ENCODE measurements at regions of chr5 and their contacts with region 1.

Region 1: DNA sequence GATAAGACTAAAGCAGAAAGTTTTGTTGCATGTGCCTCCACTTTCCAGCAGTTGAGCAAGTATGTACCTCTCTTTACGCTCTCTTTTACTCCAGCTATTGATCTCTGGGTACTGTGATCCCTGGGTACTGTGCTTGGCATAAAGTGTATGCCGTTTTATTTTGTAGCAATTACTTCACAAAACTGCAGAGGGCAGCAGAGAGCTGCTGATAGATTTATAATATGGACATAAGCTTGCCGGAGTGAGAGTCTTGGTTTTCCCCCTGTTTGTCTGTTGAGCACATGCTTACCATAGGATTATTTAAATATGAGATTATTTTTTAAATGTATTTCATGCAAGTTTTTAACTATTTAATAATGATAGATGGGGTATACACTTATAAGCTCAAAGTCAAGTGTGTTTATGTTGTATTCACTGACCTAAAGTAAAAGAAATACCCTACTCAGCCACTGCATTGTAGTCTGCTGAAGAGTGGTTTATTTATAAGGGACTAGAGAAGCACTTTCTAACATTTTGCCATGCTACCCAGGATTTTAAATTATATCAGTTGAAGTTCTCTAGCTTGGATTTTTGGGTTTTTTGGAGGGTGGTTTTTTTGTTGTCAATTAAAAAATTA is 13.0 kb downstream of the TTC1 start:
- DNase-seq: peak; percentile 36 to 58 (median 51)
- H3K4me3 ChIP-seq: no peak overlapping the region
- H3K4me3 Mint-ChIP-seq: peak overlapping the region in 4 of 7 donors; percentile 17 to 37 (median 30)
- H3K27ac ChIP-seq: no peak overlapping the region
- H3K27ac Mint-ChIP-seq: peak overlapping the region in 7 of 8 donors; percentile 9 to 91 (median 80)
- H3K4me1 ChIP-seq: peaks cover 7% of the 10 kb centered on the region
- H3K4me1 Mint-ChIP-seq: peaks cover 36 to 63% (median 47%) of the 10 kb centered on the region in 3 donors
- H3K27me3 ChIP-seq: no peaks in the 10 kb centered on the region
- H3K27me3 Mint-ChIP-seq: no peaks in the 10 kb centered on the region

Region 2: DNA sequence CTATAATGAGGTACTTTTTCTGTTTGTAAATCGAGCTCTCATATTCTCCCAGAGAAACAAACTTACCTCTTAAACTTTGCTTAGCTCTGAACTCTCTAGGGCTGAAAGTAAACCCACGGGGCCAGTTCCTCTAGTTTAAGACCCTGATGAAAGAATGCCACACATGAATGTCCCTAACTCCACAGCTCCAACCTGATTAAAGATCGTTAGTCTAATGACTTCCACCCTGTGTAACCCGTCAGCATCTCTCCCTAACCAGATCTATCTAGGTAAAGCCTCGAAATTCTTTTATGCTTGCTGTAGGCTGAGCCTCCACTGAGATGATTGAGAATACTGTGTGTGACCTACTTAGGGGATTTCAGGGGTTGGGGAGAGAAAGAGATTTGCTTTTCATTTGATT is 78.6 kb before region 1 on chr5:
- CTCF ChIA-PET with region 1: no interaction called
- POLR2A ChIA-PET with region 1: no interaction called
- DNase-seq: no peak
- H3K4me3 ChIP-seq: no peak overlapping the region
- H3K4me3 Mint-ChIP-seq: no peak overlapping the region
- H3K27ac ChIP-seq: no peak overlapping the region
- H3K27ac Mint-ChIP-seq: no peak overlapping the region
- H3K4me1 ChIP-seq: no peaks in the 10 kb centered on the region
- H3K4me1 Mint-ChIP-seq: peaks cover 0 to 2% (median 0%) of the 10 kb centered on the region in 3 donors
- H3K27me3 ChIP-seq: no peaks in the 10 kb centered on the region
- H3K27me3 Mint-ChIP-seq: peaks cover 15 to 54% of the 10 kb centered on the region in 2 donors

Region 3: DNA sequence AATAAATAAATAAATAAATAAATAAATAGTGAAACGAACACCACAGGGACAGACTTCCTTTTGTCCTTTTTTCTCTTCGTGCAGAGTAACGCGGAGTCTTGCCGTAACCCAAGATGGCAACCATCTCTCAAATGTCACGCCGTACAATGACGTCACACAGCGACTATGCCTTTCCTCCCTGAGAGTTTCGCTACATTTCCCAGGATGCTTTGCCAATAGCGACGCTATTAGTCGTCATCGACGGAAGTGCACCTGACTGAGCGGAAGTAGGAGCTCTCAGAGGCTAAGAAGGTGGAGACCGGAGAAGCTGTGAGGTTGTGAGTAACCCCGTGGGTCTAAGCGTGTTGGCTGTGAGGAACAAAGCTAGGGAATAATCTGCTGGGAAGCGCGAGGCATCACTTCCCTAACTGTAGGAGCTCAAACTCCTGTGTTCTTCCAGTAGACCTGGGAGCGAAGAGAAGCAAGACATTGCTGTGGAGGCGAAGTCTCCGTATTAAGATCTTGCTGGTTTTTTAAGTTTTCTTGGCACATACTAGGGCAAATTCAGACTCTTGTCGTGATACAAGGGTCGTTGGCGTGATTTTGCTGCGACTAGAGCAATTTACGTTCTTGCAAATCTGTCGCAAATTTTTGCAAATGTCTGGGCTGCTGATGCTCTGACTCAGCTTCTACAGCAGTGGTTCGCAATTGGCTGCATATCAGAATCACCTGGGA is 12.9 kb before region 1 on chr5 and contains the start of gene TTC1:
- CTCF ChIA-PET with region 1: interaction called, 10 read pairs
- POLR2A ChIA-PET with region 1: interaction called, 7 read pairs
- DNase-seq: peak; percentile 82 to 96 (median 90)
- H3K4me3 ChIP-seq: peak within 1 kb of the TSS; percentile 100
- H3K4me3 Mint-ChIP-seq: peak within 1 kb of the TSS; percentile 92 to 99 (median 97)
- H3K27ac ChIP-seq: peak within 1 kb of the TSS; percentile 98
- H3K27ac Mint-ChIP-seq: peak within 1 kb of the TSS; percentile 82 to 99 (median 98)
- H3K4me1 ChIP-seq: peaks cover 14% of the 10 kb centered on the region
- H3K4me1 Mint-ChIP-seq: peaks cover 26 to 38% (median 33%) of the 10 kb centered on the region in 3 donors
- H3K27me3 ChIP-seq: no peaks in the 10 kb centered on the region
- H3K27me3 Mint-ChIP-seq: no peaks in the 10 kb centered on the region
- total RNA-seq, gene TTC1: 66.4 to 70.7 TPM

Region 4: DNA sequence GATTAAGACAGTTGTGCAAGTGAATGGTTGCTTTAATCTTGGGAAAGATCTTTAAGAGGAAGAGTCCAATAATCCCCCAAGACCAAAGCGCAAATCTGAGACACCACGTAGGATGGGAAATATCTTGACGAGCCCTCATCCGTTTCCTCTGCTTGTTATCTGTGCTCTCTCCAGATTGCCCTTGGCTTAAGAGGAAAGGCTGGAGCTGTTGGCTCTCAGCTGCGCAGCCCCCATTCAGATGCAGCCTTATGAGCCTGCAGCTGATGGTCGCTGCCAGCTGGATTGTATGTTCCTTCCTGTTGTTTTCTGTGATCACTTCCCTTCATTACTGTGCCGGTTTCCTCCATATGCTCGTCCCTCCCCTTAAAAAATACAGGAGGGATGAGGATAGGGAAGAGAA is 49.6 kb after region 1 on chr5:
- CTCF ChIA-PET with region 1: interaction called, 4 read pairs
- POLR2A ChIA-PET with region 1: interaction called, 15 read pairs
- DNase-seq: no peak
- H3K4me3 ChIP-seq: no peak overlapping the region
- H3K4me3 Mint-ChIP-seq: no peak overlapping the region
- H3K27ac ChIP-seq: no peak overlapping the region
- H3K27ac Mint-ChIP-seq: no peak overlapping the region
- H3K4me1 ChIP-seq: no peaks in the 10 kb centered on the region
- H3K4me1 Mint-ChIP-seq: no peaks in the 10 kb centered on the region
- H3K27me3 ChIP-seq: no peaks in the 10 kb centered on the region
- H3K27me3 Mint-ChIP-seq: no peaks in the 10 kb centered on the region

Region 5: GRCh38 chr5:160342403-160342941 is 320.5 kb after region 1 on chr5:
- CTCF ChIA-PET with region 1: interaction called, 71 read pairs
- POLR2A ChIA-PET with region 1: no interaction called
- DNase-seq: no peak
- H3K4me3 ChIP-seq: no peak overlapping the region
- H3K4me3 Mint-ChIP-seq: no peak overlapping the region
- H3K27ac ChIP-seq: no peak overlapping the region
- H3K27ac Mint-ChIP-seq: peak overlapping the region in 1 of 8 donors; percentile 47
- H3K4me1 ChIP-seq: no peaks in the 10 kb centered on the region
- H3K4me1 Mint-ChIP-seq: peaks cover 0 to 4% (median 4%) of the 10 kb centered on the region in 3 donors
- H3K27me3 ChIP-seq: no peaks in the 10 kb centered on the region
- H3K27me3 Mint-ChIP-seq: peaks cover 3 to 9% of the 10 kb centered on the region in 2 donors